Naive thymus-derived CD4-positive, alpha-beta T cell (primary cell): ENCODE measurements at regions of chr19 and their contacts with region 1.

Region 1: GRCh38 chr19:54390942-54391577 is 24.2 kb upstream of the TTYH1 start:
- DNase-seq: peak; percentile 48 to 76 (median 60)
- ATAC-seq: peak; percentile 67
- H3K4me3 ChIP-seq: no peak overlapping the region
- H3K4me3 Mint-ChIP-seq: peak overlapping the region; percentile 60 to 81 (median 71)
- H3K27ac ChIP-seq: no peak overlapping the region
- H3K27ac Mint-ChIP-seq: peak overlapping the region; percentile 49 to 92 (median 80)
- H3K4me1 ChIP-seq: peaks cover 23 to 26% of the 10 kb centered on the region in 2 donors
- H3K4me1 Mint-ChIP-seq: peaks cover 32 to 41% (median 39%) of the 10 kb centered on the region in 7 donors
- H3K27me3 ChIP-seq: no peaks in the 10 kb centered on the region
- H3K27me3 Mint-ChIP-seq: peaks cover 0 to 12% (median 0%) of the 10 kb centered on the region in 5 donors

Region 2: DNA sequence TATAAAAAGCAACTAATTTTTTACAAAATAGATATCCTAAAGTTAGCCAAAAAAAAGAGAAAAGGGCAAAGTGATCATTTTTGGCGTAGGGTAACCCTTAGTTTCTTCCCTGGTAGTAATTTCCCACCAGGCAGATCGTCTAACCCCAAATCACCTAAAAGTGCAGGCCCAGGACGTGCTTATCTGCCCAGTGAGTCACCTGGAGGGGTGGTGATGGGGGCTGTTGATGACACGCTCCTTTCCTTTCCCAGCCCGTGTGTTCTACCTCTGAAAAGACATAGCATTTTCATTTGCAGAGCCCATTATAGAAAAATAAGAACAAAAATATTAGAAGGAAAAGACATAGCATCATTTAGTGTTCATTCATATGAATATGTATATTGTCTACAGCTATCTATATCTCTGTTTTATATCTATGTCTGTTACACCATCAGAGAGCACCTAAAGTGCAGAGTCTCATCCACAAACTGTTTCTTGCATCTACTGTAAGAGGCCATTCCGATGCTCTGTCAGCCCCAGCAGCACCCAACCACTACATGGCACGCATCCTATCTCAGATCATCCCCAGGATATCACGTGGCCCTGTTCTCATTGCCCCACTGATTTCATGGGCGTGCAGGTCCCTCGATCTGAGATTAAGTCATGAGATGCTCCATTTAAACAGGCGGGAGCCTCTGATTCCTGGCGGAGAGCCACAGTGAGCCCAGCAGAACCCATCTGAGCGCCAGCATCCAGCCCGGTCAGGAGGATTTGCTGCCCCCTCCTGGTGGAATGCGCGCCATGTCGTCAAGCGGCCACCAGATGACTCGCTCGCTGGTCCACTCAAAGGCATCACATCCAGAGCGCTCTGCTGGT is 159.8 kb before region 1 on chr19:
- CTCF ChIA-PET with region 1: interaction called, 4 read pairs
- POLR2A ChIA-PET with region 1: no interaction called
- intact Hi-C with region 1: loop called in 1 of 2 experiments (anchors 1 kb)
- DNase-seq: peak; percentile 48 to 89 (median 70)
- ATAC-seq: peak; percentile 85
- H3K4me3 ChIP-seq: no peak overlapping the region
- H3K4me3 Mint-ChIP-seq: no peak overlapping the region
- H3K27ac ChIP-seq: no peak overlapping the region
- H3K27ac Mint-ChIP-seq: peak overlapping the region in 1 of 9 donors; percentile 26
- H3K4me1 ChIP-seq: peaks cover 0 to 3% of the 10 kb centered on the region in 2 donors
- H3K4me1 Mint-ChIP-seq: peaks cover 0 to 14% (median 5%) of the 10 kb centered on the region in 7 donors
- H3K27me3 ChIP-seq: no peaks in the 10 kb centered on the region
- H3K27me3 Mint-ChIP-seq: peaks cover 0 to 52% (median 35%) of the 10 kb centered on the region in 5 donors

Region 3: DNA sequence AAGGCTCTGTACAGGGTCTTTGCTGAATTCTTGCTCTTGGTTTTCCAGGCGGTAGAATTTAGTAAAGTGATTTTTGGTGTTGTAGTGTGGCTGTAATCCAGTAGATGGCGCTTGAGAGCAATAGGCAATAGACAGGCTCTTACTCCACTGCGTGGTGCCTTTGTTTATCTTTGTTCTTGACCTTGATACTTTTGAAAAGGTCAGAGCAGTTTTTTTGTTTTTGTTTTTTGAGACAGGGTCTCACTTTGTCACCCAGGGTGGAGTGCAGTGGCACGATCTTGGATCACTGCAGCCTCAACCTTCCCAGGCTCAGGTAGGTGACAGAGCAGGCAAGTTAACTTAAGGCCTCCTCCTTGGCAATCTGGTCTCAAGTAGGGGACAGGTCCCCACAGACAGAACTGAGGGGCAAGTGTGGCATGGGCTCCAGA is 65.9 kb before region 1 on chr19:
- CTCF ChIA-PET with region 1: interaction called, 135 read pairs
- POLR2A ChIA-PET with region 1: interaction called, 20 read pairs
- intact Hi-C with region 1: loop called (anchors 1 kb)
- DNase-seq: peak in 8 of 9 donors; percentile 35 to 74 (median 62)
- ATAC-seq: peak; percentile 83
- H3K4me3 ChIP-seq: no peak overlapping the region
- H3K4me3 Mint-ChIP-seq: no peak overlapping the region
- H3K27ac ChIP-seq: no peak overlapping the region
- H3K27ac Mint-ChIP-seq: no peak overlapping the region
- H3K4me1 ChIP-seq: peaks cover 0 to 7% of the 10 kb centered on the region in 2 donors
- H3K4me1 Mint-ChIP-seq: peaks cover 4 to 21% (median 14%) of the 10 kb centered on the region in 7 donors
- H3K27me3 ChIP-seq: no peaks in the 10 kb centered on the region
- H3K27me3 Mint-ChIP-seq: peaks cover 4 to 23% (median 7%) of the 10 kb centered on the region in 5 donors

Region 4: DNA sequence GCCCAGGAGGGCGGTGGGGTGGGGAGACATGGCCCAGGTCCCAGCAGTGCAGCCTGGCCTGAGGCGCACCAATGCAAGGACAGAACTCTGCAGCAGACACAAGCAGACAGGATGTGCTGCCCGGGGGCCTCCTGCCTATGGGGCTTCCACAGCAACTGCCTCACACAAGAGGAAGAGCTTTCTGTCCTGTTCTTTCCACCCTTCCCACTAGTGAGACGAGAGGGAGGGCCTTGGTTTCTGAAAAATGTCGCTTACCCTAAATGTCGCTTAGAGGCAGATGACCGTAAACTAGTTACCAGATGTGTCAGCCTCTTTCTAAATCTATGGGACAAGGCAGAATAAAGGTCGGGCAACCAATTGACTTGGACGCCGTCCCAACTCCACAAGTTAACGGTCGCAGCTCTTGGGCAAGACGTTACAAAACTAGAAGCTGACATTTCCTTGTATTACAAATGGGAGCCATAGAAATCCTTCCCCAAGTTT is 26.2 kb before region 1 on chr19 and contains the start of gene LAIR1:
- CTCF ChIA-PET with region 1: interaction called, 14 read pairs
- POLR2A ChIA-PET with region 1: interaction called, 39 read pairs
- intact Hi-C with region 1: loop called (anchors 1 to 2 kb)
- DNase-seq: peak; percentile 30 to 58 (median 49)
- ATAC-seq: peak; percentile 72
- H3K4me3 ChIP-seq: peak within 1 kb of the TSS; percentile 67
- H3K4me3 Mint-ChIP-seq: peak within 1 kb of the TSS; percentile 87 to 96 (median 94)
- H3K27ac ChIP-seq: peak within 1 kb of the TSS; percentile 79
- H3K27ac Mint-ChIP-seq: peak within 1 kb of the TSS; percentile 85 to 97 (median 93)
- H3K4me1 ChIP-seq: peaks cover 54 to 59% of the 10 kb centered on the region in 2 donors
- H3K4me1 Mint-ChIP-seq: peaks cover 40 to 88% (median 72%) of the 10 kb centered on the region in 7 donors
- H3K27me3 ChIP-seq: no peaks in the 10 kb centered on the region
- H3K27me3 Mint-ChIP-seq: peaks cover 0 to 25% (median 0%) of the 10 kb centered on the region in 5 donors
- total RNA-seq, gene LAIR1: 47.0 to 92.3 (median 82.3) TPM

Region 5: GRCh38 chr19:54379187-54379678 is 11.8 kb before region 1 on chr19:
- CTCF ChIA-PET with region 1: interaction called, 13 read pairs
- POLR2A ChIA-PET with region 1: interaction called, 30 read pairs
- intact Hi-C with region 1: loop called (anchors 1 kb)
- DNase-seq: no peak
- ATAC-seq: no peak
- H3K4me3 ChIP-seq: no peak overlapping the region
- H3K4me3 Mint-ChIP-seq: peak overlapping the region in 5 of 10 donors; percentile 5 to 71 (median 36)
- H3K27ac ChIP-seq: no peak overlapping the region
- H3K27ac Mint-ChIP-seq: peak overlapping the region in 5 of 9 donors; percentile 12 to 68 (median 25)
- H3K4me1 ChIP-seq: peaks cover 20 to 48% of the 10 kb centered on the region in 2 donors
- H3K4me1 Mint-ChIP-seq: peaks cover 42 to 74% (median 63%) of the 10 kb centered on the region in 7 donors
- H3K27me3 ChIP-seq: no peaks in the 10 kb centered on the region
- H3K27me3 Mint-ChIP-seq: peaks cover 0 to 40% (median 0%) of the 10 kb centered on the region in 5 donors